GM12878 (cell line): ENCODE measurements at regions of chr12 and their contacts with region 1.

Region 1: DNA sequence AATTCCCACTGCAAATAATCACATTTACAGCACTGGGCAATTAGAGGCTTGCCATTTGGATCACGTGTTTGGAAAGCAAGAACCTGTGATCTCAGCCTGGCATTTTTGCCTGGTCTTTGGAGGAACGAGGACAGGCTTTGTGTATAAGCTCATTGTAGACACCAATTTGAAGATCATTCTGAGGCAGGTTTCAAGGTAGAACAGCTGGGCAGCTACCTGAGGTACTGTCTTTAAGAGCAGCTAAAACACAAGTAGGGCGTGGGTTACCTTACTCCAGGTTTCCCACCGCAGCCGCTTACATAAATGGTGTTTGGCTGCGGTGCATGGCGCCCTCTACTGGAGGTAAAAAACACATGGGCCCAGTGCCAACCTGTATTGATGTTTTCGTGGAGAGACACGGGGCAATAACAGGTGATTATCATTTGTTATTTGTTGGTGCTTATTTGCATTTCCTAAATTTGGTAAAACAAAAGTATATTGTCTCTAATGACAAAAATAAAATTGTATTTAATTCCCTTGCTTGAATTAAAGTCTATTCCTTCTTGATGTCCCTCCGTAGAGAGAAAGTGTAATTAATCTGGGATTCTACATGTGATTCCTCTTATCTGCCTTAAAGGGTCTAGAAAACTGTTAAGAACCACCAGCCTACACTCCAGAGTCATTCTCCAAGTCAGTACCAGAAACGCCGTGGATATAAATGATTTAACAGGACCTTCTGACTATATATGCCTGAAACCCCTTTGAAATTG is 69.7 kb downstream of the SVOP start:
- DNase-seq: peak; percentile 38
- ATAC-seq: peak; percentile 97
- H3K4me3 ChIP-seq: no peak overlapping the region
- H3K27ac ChIP-seq: no peak overlapping the region
- H3K4me1 ChIP-seq: peaks cover 3% of the 10 kb centered on the region; the same call in 1 of the 2 replicates
- H3K27me3 ChIP-seq: no peaks in the 10 kb centered on the region; a peak in 1 of 4 replicates
- CTCF ChIP-seq: peak; percentile 85 to 87 (median 86)
- EP300 ChIP-seq: no peak
- POLR2A ChIP-seq: no peak
- RAD21 ChIP-seq: peak; percentile 92

Region 2: DNA sequence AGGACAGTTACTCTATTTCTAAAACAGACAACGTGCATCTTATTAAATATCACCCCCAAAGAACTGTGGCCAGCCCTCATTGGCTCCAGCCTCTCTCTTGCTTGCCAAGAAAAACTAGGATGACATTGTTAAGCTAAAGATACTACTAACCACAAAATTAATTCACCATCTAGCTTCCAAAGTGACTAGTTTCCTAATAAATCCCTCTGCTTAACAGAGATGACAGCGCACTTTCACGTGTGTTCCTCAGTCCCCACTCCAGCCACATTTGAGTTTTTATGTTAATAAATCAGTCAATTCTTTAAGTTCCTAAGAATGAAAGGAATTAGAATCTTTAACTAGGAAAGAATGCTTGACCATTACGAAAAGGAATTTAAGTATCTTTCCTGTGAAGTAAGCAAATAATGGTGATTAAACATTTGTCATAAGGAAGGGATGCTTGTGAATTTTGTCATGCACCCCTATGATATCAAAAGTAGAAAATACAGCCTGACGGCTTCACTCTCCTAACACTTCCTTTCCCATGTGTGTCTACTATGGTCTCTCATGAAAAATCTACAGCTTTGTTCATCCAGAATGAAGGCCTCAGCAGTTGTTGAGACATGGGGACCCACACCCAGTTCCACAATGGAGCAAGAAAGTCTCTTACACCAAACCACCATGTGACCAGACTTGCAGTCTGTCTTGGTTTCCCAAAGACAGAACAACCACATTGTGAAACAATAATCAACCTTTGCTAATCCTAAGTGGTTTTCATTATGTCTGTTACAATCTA is 228.0 kb before region 1 on chr12:
- CTCF ChIA-PET with region 1: no interaction called
- POLR2A ChIA-PET with region 1: no interaction called
- RAD21 ChIA-PET with region 1: no interaction called
- SMC1A ChIA-PET with region 1: no interaction called
- in situ Hi-C with region 1: no loop called
- intact Hi-C with region 1: no loop called
- DNase-seq: no peak
- ATAC-seq: peak; percentile 52
- H3K4me3 ChIP-seq: no peak overlapping the region
- H3K27ac ChIP-seq: no peak overlapping the region
- H3K4me1 ChIP-seq: peaks cover 11% of the 10 kb centered on the region
- H3K27me3 ChIP-seq: no peaks in the 10 kb centered on the region
- CTCF ChIP-seq: no peak
- EP300 ChIP-seq: no peak
- POLR2A ChIP-seq: no peak
- RAD21 ChIP-seq: no peak

Region 3: GRCh38 chr12:108884116-108885012 is 66.8 kb before region 1 on chr12:
- CTCF ChIA-PET with region 1: interaction called, 46 read pairs
- POLR2A ChIA-PET with region 1: no interaction called
- RAD21 ChIA-PET with region 1: interaction called, 19 read pairs
- SMC1A ChIA-PET with region 1: interaction called, 18 read pairs
- in situ Hi-C with region 1: loop called (anchors 5 kb)
- intact Hi-C with region 1: loop called (anchors 1 kb)
- DNase-seq: no peak
- ATAC-seq: peak; percentile 94
- H3K4me3 ChIP-seq: no peak overlapping the region
- H3K27ac ChIP-seq: no peak overlapping the region
- H3K4me1 ChIP-seq: peaks cover 4% of the 10 kb centered on the region; the same call in 1 of the 2 replicates
- H3K27me3 ChIP-seq: no peaks in the 10 kb centered on the region
- CTCF ChIP-seq: peak; percentile 65 to 81 (median 78)
- EP300 ChIP-seq: no peak
- POLR2A ChIP-seq: no peak
- RAD21 ChIP-seq: peak; percentile 47

Region 4: GRCh38 chr12:108939594-108939993 is 11.6 kb before region 1 on chr12:
- CTCF ChIA-PET with region 1: interaction called, 12 read pairs
- POLR2A ChIA-PET with region 1: interaction called, 10 read pairs
- RAD21 ChIA-PET with region 1: no interaction called
- SMC1A ChIA-PET with region 1: interaction called, 5 read pairs
- in situ Hi-C with region 1: no loop called
- intact Hi-C with region 1: no loop called
- DNase-seq: peak; percentile 21
- ATAC-seq: peak; percentile 96
- H3K4me3 ChIP-seq: no peak overlapping the region
- H3K27ac ChIP-seq: no peak overlapping the region
- H3K4me1 ChIP-seq: peaks cover 12% of the 10 kb centered on the region
- H3K27me3 ChIP-seq: no peaks in the 10 kb centered on the region; a peak in 2 of 4 replicates
- CTCF ChIP-seq: no peak
- EP300 ChIP-seq: no peak
- POLR2A ChIP-seq: no peak
- RAD21 ChIP-seq: no peak

Region 5: GRCh38 chr12:108967869-108968540 is 16.8 kb after region 1 on chr12:
- CTCF ChIA-PET with region 1: interaction called, 6 read pairs
- POLR2A ChIA-PET with region 1: interaction called, 3 read pairs
- RAD21 ChIA-PET with region 1: no interaction called
- SMC1A ChIA-PET with region 1: interaction called, 10 read pairs
- in situ Hi-C with region 1: no loop called
- intact Hi-C with region 1: no loop called
- DNase-seq: no peak
- ATAC-seq: peak; percentile 51; the same call in 2 of the 3 replicates
- H3K4me3 ChIP-seq: no peak overlapping the region
- H3K27ac ChIP-seq: no peak overlapping the region
- H3K4me1 ChIP-seq: no peaks in the 10 kb centered on the region
- H3K27me3 ChIP-seq: no peaks in the 10 kb centered on the region
- CTCF ChIP-seq: peak; percentile 30 to 60 (median 45)
- EP300 ChIP-seq: no peak
- POLR2A ChIP-seq: no peak
- RAD21 ChIP-seq: no peak